ENCODE measurements at regions of chr12 and their contacts with region 1.

Region 1: DNA sequence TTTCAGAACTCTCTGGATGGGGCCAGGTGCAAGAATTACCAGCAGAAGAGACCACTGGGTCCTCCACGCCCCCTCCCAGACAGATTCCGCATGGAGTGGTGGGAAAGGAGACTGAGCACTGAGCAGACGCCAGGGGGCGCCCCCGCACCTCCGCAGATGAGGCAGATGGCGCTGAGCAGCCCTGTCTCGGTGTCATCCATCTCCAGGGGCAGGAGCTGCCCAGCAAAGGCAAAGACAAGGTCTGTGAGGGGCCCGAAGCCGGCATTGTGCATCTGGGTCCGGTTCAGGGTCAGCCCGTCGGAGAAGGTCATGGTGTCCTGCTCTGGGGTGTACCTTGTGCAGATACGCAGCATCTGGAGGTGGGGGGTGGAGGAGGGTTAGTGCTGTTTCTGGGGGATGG is 6.3 kb upstream of the ITGB7 start:
- DNase-seq: peak; percentile 84 to 92 (median 86)
- ATAC-seq: peak; percentile 74 to 82 (median 78)
- H3K4me3 ChIP-seq: peak overlapping the region in 8 of 12 donors; percentile 1 to 60 (median 43)
- H3K27ac ChIP-seq: peak overlapping the region in 11 of 12 donors; percentile 64 to 100 (median 98)
- H3K4me1 ChIP-seq: peaks cover 19 to 74% (median 59%) of the 10 kb centered on the region in 12 donors
- H3K27me3 ChIP-seq: no peaks in the 10 kb centered on the region
- CTCF ChIP-seq: peak; percentile 90 to 99 (median 96)
- POLR2A ChIP-seq: no peak

Region 2: DNA sequence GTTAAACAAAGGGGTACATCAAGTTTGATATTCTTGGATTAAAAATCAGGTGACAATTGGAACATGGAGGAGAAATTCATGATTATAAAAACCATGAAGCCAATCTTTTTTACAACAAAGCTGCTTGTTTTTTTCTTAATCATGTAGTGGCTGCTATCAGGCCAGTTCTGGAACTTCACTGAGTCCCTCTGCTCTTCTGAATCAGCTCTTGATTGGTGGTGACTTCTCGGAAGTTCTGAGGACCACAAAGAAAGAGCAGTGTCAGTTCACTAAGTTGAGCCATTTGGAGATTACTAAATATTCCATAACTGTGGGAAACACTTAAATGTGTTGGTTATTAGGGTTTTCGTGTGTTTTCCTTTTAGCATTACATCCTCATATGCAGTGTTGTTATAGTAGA is 198.6 kb before region 1 on chr12:
- intact Hi-C with region 1: no loop called
- DNase-seq: no peak
- ATAC-seq: no peak
- H3K4me3 ChIP-seq: no peak overlapping the region
- H3K27ac ChIP-seq: no peak overlapping the region
- H3K4me1 ChIP-seq: peaks cover 0 to 41% (median 8%) of the 10 kb centered on the region in 12 donors
- H3K27me3 ChIP-seq: no peaks in the 10 kb centered on the region
- CTCF ChIP-seq: no peak
- POLR2A ChIP-seq: no peak

Region 3: DNA sequence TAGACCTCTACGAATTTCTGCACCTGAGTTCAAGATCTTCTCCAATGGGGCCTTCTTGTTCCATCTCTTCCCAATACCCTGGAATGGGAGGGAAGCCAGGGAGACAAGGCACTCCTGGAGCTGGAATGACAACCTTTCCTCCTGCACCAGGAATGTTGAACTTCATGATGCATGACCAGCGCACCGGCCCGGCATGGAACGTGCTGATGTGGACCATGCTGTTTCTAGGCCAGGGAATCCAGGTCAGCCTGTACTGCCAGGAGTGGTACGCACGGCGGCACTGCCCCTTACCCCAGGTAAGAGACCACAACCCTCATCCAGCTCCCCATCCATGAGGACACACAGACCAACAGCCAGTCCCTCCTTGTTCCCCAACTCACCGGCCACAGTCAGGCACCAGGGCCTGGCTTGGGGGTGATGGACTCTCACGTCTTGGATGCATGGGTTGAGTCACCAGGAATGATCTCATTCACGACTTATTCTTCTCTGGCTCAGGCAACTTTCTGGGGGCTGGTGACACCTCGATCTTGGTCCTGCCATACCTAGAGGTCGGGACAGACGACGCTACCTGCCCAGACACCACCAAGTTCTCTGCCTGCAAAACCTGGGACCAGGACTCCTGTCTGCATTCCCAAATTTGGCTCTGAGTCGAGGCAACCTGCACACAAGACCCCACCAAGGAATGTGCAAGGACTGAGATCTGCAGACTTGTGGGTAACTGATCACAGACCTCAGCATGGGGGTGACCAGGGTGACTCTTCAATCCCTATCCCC is 89.6 kb before region 1 on chr12:
- intact Hi-C with region 1: no loop called
- DNase-seq: peak in 1 of 5 donors; percentile 12
- ATAC-seq: no peak
- H3K4me3 ChIP-seq: no peak overlapping the region
- H3K27ac ChIP-seq: no peak overlapping the region
- H3K4me1 ChIP-seq: no peaks in the 10 kb centered on the region
- H3K27me3 ChIP-seq: no peaks in the 10 kb centered on the region
- CTCF ChIP-seq: no peak
- POLR2A ChIP-seq: no peak

Region 4: GRCh38 chr12:53251477-53252348 is 38.4 kb after region 1 on chr12:
- intact Hi-C with region 1: loop called in 6 of 10 experiments (anchors 1 to 5 kb)
- DNase-seq: peak; percentile 81 to 90 (median 84)
- ATAC-seq: peak; percentile 83 to 95 (median 92)
- H3K4me3 ChIP-seq: peak overlapping the region; percentile 58 to 97 (median 82)
- H3K27ac ChIP-seq: peak overlapping the region; percentile 66 to 97 (median 94)
- H3K4me1 ChIP-seq: peaks cover 0 to 39% (median 24%) of the 10 kb centered on the region in 12 donors
- H3K27me3 ChIP-seq: no peaks in the 10 kb centered on the region
- CTCF ChIP-seq: peak in 11 of 12 donors; percentile 5 to 64 (median 31)
- POLR2A ChIP-seq: peak in 1 of 2 donors; percentile 49

Region 5: GRCh38 chr12:53267999-53268647 is 54.8 kb after region 1 on chr12 and contains the start of gene ESPL1:
- intact Hi-C with region 1: loop called in 3 of 10 experiments (anchors 5 kb)
- DNase-seq: peak; percentile 65 to 85 (median 74)
- ATAC-seq: peak; percentile 83 to 94 (median 92)
- H3K4me3 ChIP-seq: peak within 1 kb of the TSS; percentile 33 to 80 (median 67)
- H3K27ac ChIP-seq: peak within 1 kb of the TSS in 8 of 12 donors; percentile 3 to 79 (median 38)
- H3K4me1 ChIP-seq: peaks cover 0 to 23% (median 4%) of the 10 kb centered on the region in 12 donors
- H3K27me3 ChIP-seq: no peaks in the 10 kb centered on the region
- CTCF ChIP-seq: peak in 6 of 12 donors; percentile 12 to 53 (median 34)
- POLR2A ChIP-seq: peak in 1 of 2 donors; percentile 10
- total RNA-seq, gene ESPL1: 0.06 to 6.1 (median 0.43) TPM

Region 6: DNA sequence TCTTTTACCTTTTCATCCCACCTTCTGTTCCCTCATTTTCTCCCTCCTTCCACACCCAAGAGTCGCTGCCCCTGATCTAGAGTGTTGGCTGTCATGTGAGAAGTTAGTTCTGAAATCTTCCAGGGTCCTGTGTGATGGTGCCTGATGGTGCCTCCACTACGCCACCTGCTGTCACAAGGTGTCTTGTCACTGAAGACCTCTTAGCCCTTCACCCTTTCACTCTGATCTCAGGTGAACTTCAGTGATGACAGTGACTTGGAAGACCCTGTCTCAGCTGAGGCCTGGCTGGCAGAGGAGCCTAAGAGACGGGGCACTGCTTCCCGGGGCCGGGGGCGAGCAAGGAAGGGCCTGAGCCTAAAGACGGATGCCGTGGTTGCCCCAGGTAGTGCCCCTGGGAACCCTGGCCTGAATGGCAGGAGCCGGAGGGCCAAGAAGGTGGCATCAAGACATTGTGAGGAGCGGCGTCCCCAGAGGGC is 74.4 kb after region 1 on chr12:
- intact Hi-C with region 1: loop called (anchors 1 to 2 kb)
- DNase-seq: peak; percentile 62 to 83 (median 71)
- ATAC-seq: peak; percentile 62 to 90 (median 84)
- H3K4me3 ChIP-seq: no peak overlapping the region
- H3K27ac ChIP-seq: no peak overlapping the region
- H3K4me1 ChIP-seq: no peaks in the 10 kb centered on the region
- H3K27me3 ChIP-seq: no peaks in the 10 kb centered on the region
- CTCF ChIP-seq: peak; percentile 52 to 81 (median 68)
- POLR2A ChIP-seq: no peak